ENCODE measurements at regions of chr15 and their contacts with region 1.

Region 1: DNA sequence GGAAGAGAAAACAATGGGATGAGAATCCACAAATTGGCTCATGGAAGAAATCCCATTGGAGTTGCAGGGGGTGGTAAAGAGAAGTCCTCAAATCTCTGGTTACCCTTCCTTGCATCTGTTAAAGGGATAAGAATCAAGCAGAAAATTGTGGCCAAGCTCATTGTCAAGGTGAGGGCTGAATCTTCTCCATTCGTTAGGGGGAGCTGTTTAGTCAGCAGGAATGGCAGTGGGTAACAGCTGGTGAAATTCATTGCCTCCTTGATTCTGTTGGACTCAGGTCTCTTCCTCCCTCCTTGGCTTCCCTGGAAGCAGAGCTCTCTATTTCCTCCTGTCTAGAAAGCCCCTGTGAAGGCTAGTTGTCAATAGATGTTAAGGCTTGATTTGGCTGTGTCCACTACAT is 343.1 kb upstream of the SEMA6D start:
- DNase-seq: no peak
- H3K4me3 ChIP-seq: no peak overlapping the region
- CTCF ChIP-seq: peak; percentile 57

Region 2: DNA sequence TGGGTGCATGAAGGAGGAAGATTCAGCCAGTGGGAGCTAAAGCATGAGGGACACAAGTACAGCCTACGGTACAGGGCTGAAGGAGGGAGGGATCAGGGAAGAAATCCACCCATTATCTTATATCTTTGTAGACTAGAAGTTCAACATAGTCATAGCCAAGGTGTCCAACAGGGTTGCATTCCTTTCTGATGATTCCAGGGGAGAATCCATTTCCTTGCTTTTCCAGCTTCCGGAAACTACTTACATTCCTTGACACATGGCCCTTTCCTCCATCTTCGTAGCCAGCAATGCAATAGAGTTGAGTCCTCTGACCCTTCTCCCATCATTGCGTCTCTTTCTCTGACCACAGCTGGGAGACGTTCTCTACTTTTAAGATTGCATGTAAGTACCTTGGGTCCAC is 127.9 kb before region 1 on chr15:
- CTCF ChIA-PET with region 1: no interaction called
- POLR2A ChIA-PET with region 1: no interaction called
- DNase-seq: no peak
- H3K4me3 ChIP-seq: no peak overlapping the region
- CTCF ChIP-seq: no peak

Region 3: GRCh38 chr15:47289656-47290055 is 84.6 kb before region 1 on chr15:
- CTCF ChIA-PET with region 1: no interaction called
- POLR2A ChIA-PET with region 1: no interaction called
- DNase-seq: no peak
- H3K4me3 ChIP-seq: no peak overlapping the region
- CTCF ChIP-seq: no peak

Region 4: DNA sequence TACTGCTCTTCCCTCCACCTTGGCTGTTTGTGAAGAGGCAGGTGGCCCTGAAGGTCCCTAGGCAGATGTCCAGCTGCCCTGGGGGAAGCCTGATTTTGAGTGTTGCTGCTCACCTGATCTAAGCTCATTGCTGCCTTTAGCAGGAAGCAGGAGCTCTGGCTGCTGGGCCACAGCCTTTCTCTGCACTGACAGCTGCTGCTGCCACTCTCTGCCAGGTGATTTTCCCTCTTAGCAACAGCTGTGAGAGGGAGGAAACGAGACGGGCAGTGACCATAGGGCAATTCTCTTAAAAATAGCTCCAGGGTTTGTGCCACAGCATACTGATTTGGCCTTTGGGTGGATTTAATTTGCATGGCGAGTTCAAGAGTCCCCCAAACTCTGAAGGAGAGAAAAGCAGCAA is 72.7 kb before region 1 on chr15:
- CTCF ChIA-PET with region 1: no interaction called
- POLR2A ChIA-PET with region 1: no interaction called
- DNase-seq: no peak
- H3K4me3 ChIP-seq: no peak overlapping the region
- CTCF ChIP-seq: no peak

Region 5: GRCh38 chr15:47384341-47384740 is 10.1 kb after region 1 on chr15:
- CTCF ChIA-PET with region 1: interaction called, 28 read pairs
- POLR2A ChIA-PET with region 1: no interaction called
- DNase-seq: peak; percentile 61
- H3K4me3 ChIP-seq: no peak overlapping the region
- CTCF ChIP-seq: no peak

Measured in AG04449 (cell line).